MCF 10A (cell line): ENCODE measurements at regions of chr20 and their contacts with region 1.

Region 1: DNA sequence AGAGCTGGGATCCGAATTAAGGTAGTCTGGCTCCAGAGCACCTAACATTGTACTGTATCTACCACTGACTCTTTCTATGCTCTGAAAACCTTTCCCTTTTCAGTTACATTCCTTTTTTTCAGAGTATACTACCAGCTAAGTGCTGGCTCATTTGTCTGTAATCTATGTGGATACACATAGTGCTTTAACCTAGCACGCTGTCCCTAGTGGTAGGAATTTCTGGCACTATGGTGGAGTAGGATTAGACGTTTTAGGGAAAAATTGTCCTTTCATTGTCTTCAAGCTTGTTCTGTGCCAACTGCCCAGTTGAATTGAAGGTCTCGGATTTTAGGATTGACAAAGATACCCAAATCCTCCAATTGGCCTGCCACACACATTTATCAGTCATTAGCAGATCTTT is 259.1 kb upstream of the FERMT1 start:
- DNase-seq: peak; percentile 40
- H3K4me3 Mint-ChIP-seq: no peak overlapping the region
- H3K27ac Mint-ChIP-seq: no peak overlapping the region
- H3K4me1 Mint-ChIP-seq: no peaks in the 10 kb centered on the region
- H3K27me3 Mint-ChIP-seq: no peaks in the 10 kb centered on the region
- CTCF ChIP-seq: peak; percentile 55

Region 2: GRCh38 chr20:6395695-6396094 is 13.8 kb after region 1 on chr20:
- CTCF ChIA-PET with region 1: interaction called, 22 read pairs
- POLR2A ChIA-PET with region 1: interaction called, 5 read pairs
- intact Hi-C with region 1: no loop called
- DNase-seq: peak; percentile 35
- H3K4me3 Mint-ChIP-seq: no peak overlapping the region
- H3K27ac Mint-ChIP-seq: no peak overlapping the region
- H3K4me1 Mint-ChIP-seq: peaks cover 11% of the 10 kb centered on the region
- H3K27me3 Mint-ChIP-seq: no peaks in the 10 kb centered on the region
- CTCF ChIP-seq: no peak